Activated CD8-positive, alpha-beta T cell treated with anti-CD3 and anti-CD28 coated beads for 36 hours (primary cell): ENCODE measurements at regions of chr18 and their contacts with region 1.

Region 1: DNA sequence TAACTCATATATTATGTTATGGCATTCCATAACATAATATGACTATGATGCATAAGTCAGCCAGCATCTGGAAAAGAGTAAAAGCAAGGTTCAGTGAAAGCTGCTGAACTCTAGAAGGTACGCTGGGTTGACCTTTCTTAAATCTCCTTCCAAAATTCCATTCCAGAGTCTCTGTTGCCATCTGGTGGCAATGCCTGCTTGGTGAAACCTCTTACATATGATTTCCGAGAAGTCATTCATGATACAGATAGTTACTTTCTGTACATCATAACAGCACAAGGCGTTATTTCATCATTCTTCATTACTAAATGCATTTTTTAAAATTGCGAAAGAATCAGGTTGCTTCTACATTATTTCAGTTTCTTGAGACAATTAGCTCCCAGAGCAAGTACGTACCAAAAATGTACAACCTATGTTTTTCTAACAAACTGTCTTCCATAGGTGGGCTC is 7.0 kb upstream of the EPG5 start:
- DNase-seq: peak; percentile 88
- ATAC-seq: peak; percentile 90
- H3K4me3 Mint-ChIP-seq: no peak overlapping the region
- H3K27ac Mint-ChIP-seq: peak overlapping the region; percentile 82
- H3K4me1 Mint-ChIP-seq: peaks cover 9% of the 10 kb centered on the region
- H3K27me3 Mint-ChIP-seq: no peaks in the 10 kb centered on the region
- CTCF ChIP-seq: peak; percentile 68

Region 2: DNA sequence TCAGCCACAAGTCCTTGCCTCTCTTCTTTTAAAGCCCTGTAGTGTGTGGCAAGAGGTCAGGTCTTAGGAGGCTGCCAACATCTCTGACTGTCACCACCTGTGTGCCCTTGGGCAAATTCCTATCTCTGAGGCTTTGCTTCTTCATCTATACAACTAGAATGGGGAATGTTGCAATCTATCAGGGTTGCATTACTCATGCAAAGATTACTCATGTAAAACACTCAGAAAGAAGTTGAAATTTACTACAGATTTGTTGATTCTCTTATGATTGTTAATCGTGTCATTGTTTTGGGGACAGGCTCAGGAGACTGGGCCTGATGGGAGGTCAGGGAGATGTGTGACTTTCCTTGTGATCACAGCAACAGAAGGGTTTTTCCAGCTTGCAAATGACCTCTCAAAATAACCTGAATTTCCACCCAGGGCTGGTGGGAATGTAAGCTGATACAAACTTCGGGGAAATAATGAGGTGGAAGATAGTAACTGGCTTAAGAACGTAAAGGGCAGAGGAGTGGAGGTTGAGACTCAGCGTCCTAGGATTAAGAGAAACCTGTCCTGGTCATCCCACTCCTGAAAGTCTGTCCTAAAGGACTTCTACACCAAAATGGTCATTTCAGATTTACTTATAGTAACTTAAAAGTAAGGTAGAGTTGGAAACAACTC is 180.7 kb before region 1 on chr18:
- CTCF ChIA-PET with region 1: no interaction called
- POLR2A ChIA-PET with region 1: no interaction called
- intact Hi-C with region 1: no loop called
- DNase-seq: no peak
- ATAC-seq: no peak
- H3K4me3 Mint-ChIP-seq: no peak overlapping the region
- H3K27ac Mint-ChIP-seq: no peak overlapping the region
- H3K4me1 Mint-ChIP-seq: no peaks in the 10 kb centered on the region
- H3K27me3 Mint-ChIP-seq: no peaks in the 10 kb centered on the region
- CTCF ChIP-seq: no peak

Region 3: DNA sequence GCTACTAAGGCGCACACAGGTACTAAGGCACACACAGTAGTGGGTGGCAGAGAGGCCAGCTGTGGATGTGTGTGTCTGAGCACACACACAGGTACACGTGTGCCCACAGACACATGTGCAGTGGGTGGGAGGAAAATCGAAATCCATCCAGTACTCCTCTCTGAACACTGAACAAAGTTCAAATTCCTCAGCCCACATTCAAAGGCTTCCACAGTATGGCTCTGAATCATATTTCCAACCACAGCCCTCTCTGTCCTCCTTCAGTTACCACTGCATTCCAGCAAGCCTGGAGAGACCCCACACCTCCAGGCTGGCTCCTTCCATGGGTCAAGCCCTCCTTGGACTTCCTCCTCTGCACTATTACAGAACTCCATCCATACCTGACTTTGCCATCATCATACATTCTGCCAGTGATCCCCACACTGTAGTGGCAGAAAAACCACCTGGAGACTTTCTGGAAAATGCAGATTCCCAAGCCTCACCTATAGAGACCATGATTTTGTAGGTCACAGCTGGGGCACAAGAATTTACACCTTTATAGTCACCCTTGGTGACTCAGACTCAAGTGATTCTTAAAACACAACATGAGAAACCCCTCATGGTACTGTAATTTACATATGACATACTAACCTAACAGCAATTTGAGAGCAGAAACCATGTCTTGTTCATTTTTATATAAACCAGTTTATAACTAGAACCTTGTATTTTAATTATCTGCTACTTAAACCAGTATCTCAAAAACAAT is 38.3 kb before region 1 on chr18:
- CTCF ChIA-PET with region 1: interaction called, 4 read pairs
- POLR2A ChIA-PET with region 1: no interaction called
- intact Hi-C with region 1: loop called (anchors 5 kb)
- DNase-seq: no peak
- ATAC-seq: peak; percentile 59
- H3K4me3 Mint-ChIP-seq: no peak overlapping the region
- H3K27ac Mint-ChIP-seq: peak overlapping the region; percentile 31
- H3K4me1 Mint-ChIP-seq: peaks cover 33% of the 10 kb centered on the region
- H3K27me3 Mint-ChIP-seq: no peaks in the 10 kb centered on the region
- CTCF ChIP-seq: no peak

Region 4: GRCh38 chr18:45984546-45985235 is 10.6 kb after region 1 on chr18:
- CTCF ChIA-PET with region 1: interaction called, 17 read pairs
- POLR2A ChIA-PET with region 1: interaction called, 4 read pairs
- intact Hi-C with region 1: no loop called
- DNase-seq: no peak
- ATAC-seq: no peak
- H3K4me3 Mint-ChIP-seq: no peak overlapping the region
- H3K27ac Mint-ChIP-seq: no peak overlapping the region
- H3K4me1 Mint-ChIP-seq: peaks cover 4% of the 10 kb centered on the region
- H3K27me3 Mint-ChIP-seq: no peaks in the 10 kb centered on the region
- CTCF ChIP-seq: no peak